B cell (primary cell): ENCODE measurements at regions of chr6 and their contacts with region 1.

Region 1: GRCh38 chr6:53725791-53726431 is 60.4 kb upstream of the KLHL31 start:
- DNase-seq: peak; percentile 79
- ATAC-seq: peak; percentile 94
- H3K4me3 ChIP-seq: no peak overlapping the region
- H3K4me3 Mint-ChIP-seq: no peak overlapping the region
- H3K27ac ChIP-seq: no peak overlapping the region
- H3K27ac Mint-ChIP-seq: peak overlapping the region; percentile 1
- H3K4me1 ChIP-seq: peaks cover 6 to 8% of the 10 kb centered on the region in 2 donors
- H3K4me1 Mint-ChIP-seq: peaks cover 4% of the 10 kb centered on the region
- H3K27me3 ChIP-seq: peaks cover 0 to 4% (median 0%) of the 10 kb centered on the region in 4 experiments
- H3K27me3 Mint-ChIP-seq: peaks cover 13% of the 10 kb centered on the region
- CTCF ChIP-seq: peak; percentile 98

Region 2: DNA sequence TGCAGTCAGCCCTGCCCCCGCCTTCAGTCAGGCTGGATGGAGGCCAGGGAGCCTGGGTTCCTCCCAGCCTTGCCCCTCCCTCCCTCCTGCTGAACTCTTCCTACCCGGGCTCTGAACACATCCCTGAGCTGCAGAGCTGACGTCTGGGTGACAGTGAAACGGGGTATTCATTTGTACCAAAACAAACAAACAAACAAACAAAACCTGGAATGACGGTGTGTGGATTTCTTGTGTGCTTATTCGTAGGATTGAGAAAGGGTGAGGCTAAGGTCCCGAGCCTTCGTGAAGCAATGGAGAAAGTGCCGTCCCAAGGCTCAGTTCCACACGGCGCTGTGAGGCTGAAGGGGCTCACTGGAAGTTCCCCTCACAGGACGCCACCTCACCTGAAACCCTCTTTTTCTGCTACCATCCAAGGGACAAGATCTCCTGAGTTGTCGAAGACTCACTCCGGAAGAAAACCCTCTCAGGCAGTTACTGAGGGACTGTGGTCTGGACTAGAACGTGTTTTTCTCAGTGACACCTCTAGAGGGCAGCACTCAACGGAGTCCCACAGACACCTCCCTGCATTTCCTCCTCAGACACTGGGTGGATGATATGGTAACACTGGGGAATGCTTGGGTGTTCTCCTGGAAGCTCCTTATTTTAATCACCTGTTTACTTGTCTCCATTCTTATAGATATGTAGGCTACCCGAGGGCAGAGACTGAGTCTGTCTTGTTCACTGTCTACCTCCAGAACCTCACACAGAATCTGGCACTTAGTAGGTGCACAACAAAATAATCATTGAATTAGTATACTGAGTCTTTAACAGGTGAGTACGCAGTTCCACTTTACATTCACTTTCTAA is 843.7 kb before region 1 on chr6:
- CTCF ChIA-PET with region 1: no interaction called
- POLR2A ChIA-PET with region 1: no interaction called
- intact Hi-C with region 1: loop called (anchors 2 kb)
- DNase-seq: peak; percentile 76
- ATAC-seq: peak; percentile 96
- H3K4me3 ChIP-seq: peak overlapping the region; percentile 42 to 69 (median 60)
- H3K4me3 Mint-ChIP-seq: peak overlapping the region; percentile 88
- H3K27ac ChIP-seq: peak overlapping the region in 1 of 2 donors; percentile 61
- H3K27ac Mint-ChIP-seq: peak overlapping the region; percentile 3
- H3K4me1 ChIP-seq: peaks cover 0 to 9% of the 10 kb centered on the region in 2 donors
- H3K4me1 Mint-ChIP-seq: peaks cover 3% of the 10 kb centered on the region
- H3K27me3 ChIP-seq: peaks cover 0 to 2% (median 0%) of the 10 kb centered on the region in 4 experiments
- H3K27me3 Mint-ChIP-seq: no peaks in the 10 kb centered on the region
- CTCF ChIP-seq: peak; percentile 89

Region 3: DNA sequence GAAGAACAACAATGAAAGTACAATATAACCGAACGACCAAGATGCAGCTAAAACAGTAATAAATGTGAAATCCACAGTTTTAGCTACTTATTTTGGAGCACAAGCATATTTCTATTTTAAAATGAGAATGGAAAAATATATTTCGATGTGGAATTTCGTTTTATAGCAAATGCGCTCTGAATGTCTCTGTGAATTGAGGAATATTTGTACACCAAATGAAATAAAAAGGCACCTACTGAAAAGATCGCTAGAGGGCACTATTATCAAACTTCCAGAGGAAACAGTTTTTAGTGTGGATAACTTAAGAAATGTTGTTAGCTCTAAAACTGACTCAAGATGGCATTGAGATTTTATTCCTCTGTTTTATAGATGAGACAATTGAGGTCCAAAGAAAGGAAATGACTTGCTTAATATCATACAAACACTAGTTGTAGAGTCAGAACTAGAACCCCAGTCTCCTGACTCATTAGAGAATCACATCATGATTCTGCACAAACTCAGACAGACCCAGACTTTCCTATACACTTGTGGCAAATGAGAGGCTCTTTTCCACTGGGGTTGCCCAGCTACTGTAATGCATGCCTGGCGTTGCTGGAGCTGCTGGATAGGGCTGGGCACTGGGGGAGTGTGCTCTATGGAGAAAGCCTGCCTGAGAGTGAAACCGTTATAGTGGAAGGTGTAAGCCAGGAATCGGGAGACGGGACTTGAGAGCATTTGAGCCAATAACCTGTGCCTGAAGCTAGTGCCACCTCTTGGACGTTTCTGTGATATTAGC is 232.9 kb before region 1 on chr6:
- CTCF ChIA-PET with region 1: interaction called, 270 read pairs
- POLR2A ChIA-PET with region 1: interaction called, 4 read pairs
- intact Hi-C with region 1: loop called (anchors 1 kb)
- DNase-seq: peak; percentile 64
- ATAC-seq: peak; percentile 41
- H3K4me3 ChIP-seq: no peak overlapping the region
- H3K4me3 Mint-ChIP-seq: no peak overlapping the region
- H3K27ac ChIP-seq: no peak overlapping the region
- H3K27ac Mint-ChIP-seq: no peak overlapping the region
- H3K4me1 ChIP-seq: peaks cover 0 to 2% of the 10 kb centered on the region in 2 donors
- H3K4me1 Mint-ChIP-seq: no peaks in the 10 kb centered on the region
- H3K27me3 ChIP-seq: no peaks in the 10 kb centered on the region
- H3K27me3 Mint-ChIP-seq: no peaks in the 10 kb centered on the region
- CTCF ChIP-seq: peak; percentile 89

Region 4: GRCh38 chr6:53651764-53652401 is 74.0 kb before region 1 on chr6:
- CTCF ChIA-PET with region 1: interaction called, 9 read pairs
- POLR2A ChIA-PET with region 1: no interaction called
- intact Hi-C with region 1: loop called (anchors 5 kb)
- DNase-seq: peak; percentile 87
- ATAC-seq: peak; percentile 83
- H3K4me3 ChIP-seq: peak overlapping the region; percentile 64 to 96 (median 79)
- H3K4me3 Mint-ChIP-seq: peak overlapping the region; percentile 96
- H3K27ac ChIP-seq: peak overlapping the region; percentile 9 to 51
- H3K27ac Mint-ChIP-seq: peak overlapping the region; percentile 90
- H3K4me1 ChIP-seq: peaks cover 20 to 26% of the 10 kb centered on the region in 2 donors
- H3K4me1 Mint-ChIP-seq: peaks cover 20% of the 10 kb centered on the region
- H3K27me3 ChIP-seq: peaks cover 0 to 6% (median 0%) of the 10 kb centered on the region in 4 experiments
- H3K27me3 Mint-ChIP-seq: no peaks in the 10 kb centered on the region
- CTCF ChIP-seq: peak; percentile 24

Region 5: DNA sequence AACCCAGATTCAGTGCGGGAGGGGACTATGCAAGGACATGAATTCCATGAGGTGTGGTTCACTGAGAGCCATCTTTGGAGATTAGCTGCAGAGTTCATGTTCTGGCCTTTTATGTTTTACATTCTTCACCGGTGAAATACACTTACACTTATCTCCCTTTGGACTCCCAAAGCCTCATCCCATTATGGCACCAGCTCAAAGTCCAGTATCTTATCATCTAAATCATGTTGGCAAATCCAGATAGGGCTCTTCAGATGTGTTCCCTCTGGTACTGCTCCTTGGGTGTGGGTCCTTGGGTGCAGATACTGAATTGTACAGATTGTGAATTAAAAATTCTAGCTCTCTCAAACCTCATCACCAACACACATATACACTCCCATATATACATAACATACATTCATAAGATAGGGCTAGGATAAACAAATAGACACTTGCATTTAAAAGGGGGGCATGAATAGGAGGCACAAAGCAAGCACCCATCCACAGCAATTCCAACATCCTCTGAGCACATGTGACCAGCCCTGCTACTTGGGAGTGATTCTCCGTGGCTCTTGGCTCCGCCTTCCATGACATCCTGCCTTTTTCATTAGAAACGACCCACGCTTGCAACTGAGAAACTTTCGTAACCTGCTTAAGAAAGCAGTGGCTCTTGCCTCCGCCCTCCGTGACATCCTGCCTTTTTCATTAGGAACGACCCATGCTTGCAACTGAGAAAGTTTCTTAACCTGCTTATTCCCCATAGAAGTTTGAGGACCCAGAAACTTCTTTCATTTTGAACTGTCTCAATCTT is 15.3 kb after region 1 on chr6:
- CTCF ChIA-PET with region 1: interaction called, 35 read pairs
- POLR2A ChIA-PET with region 1: no interaction called
- intact Hi-C with region 1: no loop called
- DNase-seq: no peak
- ATAC-seq: no peak
- H3K4me3 ChIP-seq: no peak overlapping the region
- H3K4me3 Mint-ChIP-seq: no peak overlapping the region
- H3K27ac ChIP-seq: no peak overlapping the region
- H3K27ac Mint-ChIP-seq: no peak overlapping the region
- H3K4me1 ChIP-seq: no peaks in the 10 kb centered on the region
- H3K4me1 Mint-ChIP-seq: no peaks in the 10 kb centered on the region
- H3K27me3 ChIP-seq: no peaks in the 10 kb centered on the region
- H3K27me3 Mint-ChIP-seq: no peaks in the 10 kb centered on the region
- CTCF ChIP-seq: no peak